Right ventricle myocardium superior (tissue), 1 donor: ENCODE measurements at regions of chr7 and their contacts with region 1.

Region 1: DNA sequence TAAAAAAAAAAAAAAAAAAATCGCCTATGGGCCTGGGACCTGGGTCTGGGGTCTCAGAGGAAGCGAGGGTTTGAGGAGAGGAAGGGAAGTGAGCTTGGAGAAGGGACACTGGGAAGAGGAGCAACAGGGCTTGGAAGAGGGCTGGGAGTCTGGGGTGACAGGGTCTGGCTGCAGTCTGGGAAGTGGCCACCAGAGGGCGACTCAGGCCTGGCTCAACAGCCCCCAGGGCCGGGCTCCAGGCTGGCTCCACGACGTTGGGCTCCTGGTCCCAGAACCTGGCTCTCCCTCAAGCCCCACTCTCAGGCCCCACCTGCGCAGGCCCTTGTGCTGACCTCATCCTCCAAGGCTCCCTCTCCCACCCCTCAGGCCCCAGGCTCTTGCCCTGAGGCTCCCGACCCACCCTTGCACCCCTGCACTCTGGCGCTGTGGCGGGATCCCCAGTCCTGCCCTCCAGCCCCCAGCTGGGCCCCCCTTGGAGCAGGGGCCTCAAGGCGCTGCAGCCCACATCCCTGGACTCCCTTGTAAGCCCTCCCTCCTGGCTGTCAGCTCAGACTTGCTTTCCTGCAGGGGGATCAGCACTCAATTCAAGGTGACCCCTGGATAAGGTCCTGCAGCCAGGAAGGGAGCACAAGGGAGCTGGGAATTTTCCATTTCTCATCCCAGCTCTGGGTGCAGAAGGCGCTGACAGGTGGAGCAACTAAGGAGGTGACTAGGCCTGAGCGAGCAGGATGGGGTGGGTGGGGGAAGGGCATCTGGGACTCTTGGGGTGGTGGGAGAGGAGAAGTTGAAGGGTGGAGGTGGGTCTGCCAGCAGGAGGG is 5.4 kb upstream of the SPACDR start:
- DNase-seq: peak; percentile 93
- ATAC-seq: peak; percentile 79

Region 2: GRCh38 chr7:100132697-100133151 is 336.7 kb before region 1 on chr7:
- intact Hi-C with region 1: no loop called
- DNase-seq: peak; percentile 62
- ATAC-seq: peak; percentile 76

Region 3: DNA sequence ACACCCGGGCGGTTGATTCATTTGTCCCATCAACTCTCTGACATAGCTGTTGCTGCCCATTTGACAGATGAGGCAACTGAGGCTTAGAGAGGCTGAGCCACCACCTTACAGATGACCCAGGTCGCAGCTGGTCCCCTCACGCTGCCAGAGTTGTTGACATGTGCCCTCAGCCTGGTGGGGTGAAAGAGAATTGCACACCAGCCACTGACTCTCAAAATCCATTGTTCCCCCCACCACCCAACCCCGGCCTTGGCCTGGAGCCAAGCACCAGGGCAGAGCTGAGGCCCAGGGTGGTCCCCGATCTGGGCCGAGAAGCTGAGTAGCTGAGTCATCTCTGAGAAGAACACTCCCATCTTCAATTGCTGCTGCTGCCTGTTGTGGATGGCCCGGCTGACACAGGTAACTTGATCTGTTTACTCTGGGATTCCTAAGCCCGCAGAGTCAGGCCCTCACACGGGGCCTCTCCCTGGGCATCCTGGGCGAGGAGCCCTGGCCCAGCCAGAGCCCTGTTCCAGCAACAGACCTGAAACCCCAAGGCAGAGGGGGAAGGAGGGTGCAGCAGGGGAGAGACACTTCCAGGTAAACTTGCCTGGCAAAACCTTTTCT is 222.2 kb before region 1 on chr7:
- intact Hi-C with region 1: no loop called
- DNase-seq: no peak
- ATAC-seq: peak; percentile 19

Region 4: DNA sequence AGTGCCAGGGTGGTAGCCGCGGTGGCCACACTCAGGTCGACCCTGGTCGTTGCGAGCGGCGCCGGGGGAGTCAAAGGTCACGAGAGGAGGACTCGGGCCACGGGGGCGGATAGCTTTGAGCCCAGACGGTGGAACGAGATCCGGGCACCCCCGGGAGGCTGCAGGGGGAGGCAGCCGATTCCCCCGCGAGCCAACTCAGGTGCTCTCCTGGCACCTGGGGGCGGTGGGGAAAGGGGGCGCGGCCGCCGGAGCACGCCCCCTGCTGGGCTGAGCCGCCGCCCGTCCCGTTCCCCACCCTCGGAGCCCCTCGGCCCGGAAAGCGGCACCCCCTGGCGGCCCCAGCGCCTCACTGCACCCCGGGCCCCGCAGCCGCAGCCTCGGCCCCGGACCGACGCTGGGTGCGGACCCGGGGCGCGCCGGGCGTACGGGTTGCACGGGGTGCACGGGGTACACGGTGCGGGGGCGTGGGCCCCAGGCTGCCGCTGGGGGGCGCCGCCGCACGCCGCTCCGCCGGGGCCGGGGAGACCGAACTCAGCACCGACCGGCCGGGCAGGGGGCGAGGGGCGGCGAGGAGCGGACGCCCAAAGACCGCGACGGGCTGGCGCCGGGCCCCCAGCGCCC is 13.8 kb after region 1 on chr7:
- intact Hi-C with region 1: loop called (anchors 2 kb)
- DNase-seq: peak; percentile 85
- ATAC-seq: peak; percentile 49

Region 5: DNA sequence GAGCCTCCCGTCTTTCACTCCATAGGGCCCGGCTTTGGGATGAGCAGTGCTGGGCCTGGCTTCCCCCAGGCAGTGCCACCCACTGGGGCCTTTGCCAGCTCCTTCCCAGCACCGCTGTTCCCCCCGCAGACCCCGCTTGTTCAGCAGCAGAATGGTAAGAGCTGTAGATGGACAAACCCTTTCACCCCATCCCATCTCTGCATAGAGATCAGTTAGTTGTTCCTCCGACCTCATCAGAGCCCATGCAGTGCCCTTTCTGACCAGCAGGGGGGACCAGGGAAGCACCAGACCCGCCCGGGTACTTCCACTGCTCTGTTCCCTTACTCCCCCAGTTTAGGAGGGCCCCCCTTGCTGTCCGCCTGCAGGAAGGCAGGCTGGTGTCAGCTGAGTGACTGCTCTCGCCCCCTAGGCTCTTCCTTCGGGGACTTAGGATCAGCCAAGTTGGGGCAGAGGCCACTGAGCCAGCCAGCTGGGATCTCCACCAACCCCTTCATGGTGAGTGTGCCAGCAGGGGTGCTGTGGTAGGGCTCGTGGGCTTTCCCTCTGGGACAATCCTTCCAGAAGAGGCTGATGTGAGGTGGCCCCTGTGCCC is 94.5 kb after region 1 on chr7:
- intact Hi-C with region 1: loop called (anchors 5 kb)
- DNase-seq: peak; percentile 90
- ATAC-seq: peak; percentile 69

Region 6: DNA sequence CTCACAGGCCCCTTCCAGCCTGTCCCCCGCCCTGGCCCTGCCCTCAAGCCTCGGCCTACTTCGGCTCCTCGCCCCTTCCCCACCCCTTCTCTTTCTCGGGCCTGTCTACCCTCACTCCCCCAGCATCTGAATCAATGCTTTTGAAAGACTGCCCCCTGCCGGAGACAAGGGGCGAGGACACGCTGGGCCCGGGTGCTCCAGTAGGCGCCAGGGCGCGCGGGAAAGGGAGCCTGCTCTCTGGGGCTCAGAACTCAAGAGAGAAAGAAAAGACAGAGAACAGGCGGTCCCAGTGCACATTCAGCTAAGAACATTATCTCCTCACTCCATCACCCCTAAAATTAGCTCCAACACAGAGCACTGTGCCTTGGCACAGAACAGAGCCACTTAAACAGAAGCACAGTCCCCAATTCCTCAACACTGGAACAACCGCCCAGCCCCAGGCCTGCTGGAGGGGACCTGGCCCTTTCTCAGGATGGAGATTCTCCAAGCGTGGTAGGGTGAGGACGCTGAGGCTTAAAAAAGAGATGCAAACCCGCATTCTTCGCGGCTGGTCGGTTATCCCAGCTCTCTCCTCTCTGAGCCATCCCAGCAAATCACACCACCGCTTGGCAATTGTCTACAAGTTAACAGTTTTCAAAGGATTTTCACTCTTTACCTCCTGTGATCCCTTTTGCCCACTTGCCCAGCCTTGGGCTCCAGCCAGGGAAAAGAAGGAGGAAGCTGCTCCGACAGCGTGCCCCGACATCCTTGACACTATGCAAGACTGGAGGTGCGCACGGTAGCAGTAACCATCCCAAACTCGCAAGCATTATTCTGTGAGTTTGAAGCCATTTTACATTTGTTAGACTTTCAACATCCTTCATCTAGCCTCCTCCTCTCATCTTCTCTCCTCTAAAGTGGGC is 222.5 kb after region 1 on chr7:
- intact Hi-C with region 1: loop called (anchors 10 kb)
- DNase-seq: peak; percentile 89
- ATAC-seq: peak; percentile 85

Region 7: GRCh38 chr7:100719523-100720319 is 250.3 kb after region 1 on chr7:
- intact Hi-C with region 1: loop called (anchors 10 kb)
- DNase-seq: no peak
- ATAC-seq: no peak